Thyroid gland (tissue), 4 donors: ENCODE measurements at regions of chr12 and their contacts with region 1.

Region 1: DNA sequence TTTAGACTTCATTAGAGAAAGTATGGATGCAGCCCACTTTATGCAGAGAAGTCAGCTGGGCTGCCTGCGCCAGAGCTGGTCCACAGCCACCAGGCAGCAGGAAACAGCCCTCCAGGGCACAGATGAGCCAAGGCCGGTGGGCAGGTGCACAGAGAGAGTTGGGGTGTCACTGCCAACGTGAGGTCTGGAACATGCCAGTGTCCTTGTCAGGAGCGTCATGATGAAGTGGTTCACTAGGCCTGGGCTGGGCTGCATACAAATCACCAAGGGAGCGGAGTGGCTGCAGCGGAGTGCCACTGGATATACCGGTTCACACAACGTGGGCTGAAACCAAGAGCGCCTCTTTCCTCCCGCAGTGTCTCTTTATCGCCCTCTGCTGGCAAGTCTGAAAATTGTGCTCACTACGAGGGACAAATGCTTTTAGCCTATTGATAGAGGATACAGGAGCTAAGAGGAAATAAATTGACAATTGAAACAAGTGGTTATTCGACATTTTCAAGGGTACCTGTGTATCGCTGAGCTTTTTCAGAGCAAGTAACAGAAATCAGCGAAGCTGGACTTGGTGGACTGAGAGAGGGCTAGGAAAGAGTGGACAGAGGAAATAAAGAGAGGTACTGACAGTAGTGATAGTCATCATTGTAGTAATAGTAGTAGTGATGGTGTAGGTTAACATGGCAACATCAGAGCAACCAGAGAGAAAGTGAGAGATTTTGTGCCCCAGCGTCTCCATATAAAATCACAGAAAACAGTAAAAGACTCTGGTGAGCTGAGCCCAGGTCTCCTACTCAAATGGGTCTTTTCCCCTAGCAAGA is 52.0 kb upstream of the ITPR2 start:
- DNase-seq: peak; percentile 90
- H3K4me3 ChIP-seq: no peak overlapping the region
- H3K27ac ChIP-seq: no peak overlapping the region
- H3K4me1 ChIP-seq: peaks cover 4% of the 10 kb centered on the region in 2 donors
- H3K27me3 ChIP-seq: no peaks in the 10 kb centered on the region
- CTCF ChIP-seq: peak; percentile 93 to 97 (median 96)
- POLR2A ChIP-seq: no peak

Region 2: DNA sequence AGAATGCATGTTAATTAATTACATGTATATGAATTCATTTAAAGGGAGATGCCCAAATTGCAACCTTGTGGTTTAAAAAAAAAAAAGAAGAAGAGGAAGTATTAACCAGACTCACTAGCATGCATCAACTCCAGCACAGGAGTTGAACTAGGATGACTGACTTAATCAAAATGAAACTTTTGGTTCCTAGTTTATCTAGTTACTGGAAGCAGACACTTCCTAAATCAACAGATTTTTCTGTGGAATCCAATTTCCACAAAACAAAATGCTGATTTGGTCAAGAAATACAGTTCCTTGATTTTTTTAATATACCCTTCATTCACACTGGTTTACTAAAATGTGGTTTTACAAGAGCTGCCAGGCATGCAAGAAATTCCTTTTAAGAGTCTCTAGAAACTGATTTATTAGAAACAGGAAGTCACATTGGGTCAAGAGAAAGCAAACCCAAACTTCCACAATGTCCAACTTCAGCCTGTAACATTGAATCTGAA is 93.6 kb before region 1 on chr12:
- intact Hi-C with region 1: no loop called
- DNase-seq: no peak
- H3K4me3 ChIP-seq: no peak overlapping the region
- H3K27ac ChIP-seq: peak overlapping the region in 2 of 3 donors; percentile 41 to 59
- H3K4me1 ChIP-seq: peaks cover 7 to 29% of the 10 kb centered on the region in 2 donors
- H3K27me3 ChIP-seq: no peaks in the 10 kb centered on the region
- CTCF ChIP-seq: no peak
- POLR2A ChIP-seq: no peak

Region 3: DNA sequence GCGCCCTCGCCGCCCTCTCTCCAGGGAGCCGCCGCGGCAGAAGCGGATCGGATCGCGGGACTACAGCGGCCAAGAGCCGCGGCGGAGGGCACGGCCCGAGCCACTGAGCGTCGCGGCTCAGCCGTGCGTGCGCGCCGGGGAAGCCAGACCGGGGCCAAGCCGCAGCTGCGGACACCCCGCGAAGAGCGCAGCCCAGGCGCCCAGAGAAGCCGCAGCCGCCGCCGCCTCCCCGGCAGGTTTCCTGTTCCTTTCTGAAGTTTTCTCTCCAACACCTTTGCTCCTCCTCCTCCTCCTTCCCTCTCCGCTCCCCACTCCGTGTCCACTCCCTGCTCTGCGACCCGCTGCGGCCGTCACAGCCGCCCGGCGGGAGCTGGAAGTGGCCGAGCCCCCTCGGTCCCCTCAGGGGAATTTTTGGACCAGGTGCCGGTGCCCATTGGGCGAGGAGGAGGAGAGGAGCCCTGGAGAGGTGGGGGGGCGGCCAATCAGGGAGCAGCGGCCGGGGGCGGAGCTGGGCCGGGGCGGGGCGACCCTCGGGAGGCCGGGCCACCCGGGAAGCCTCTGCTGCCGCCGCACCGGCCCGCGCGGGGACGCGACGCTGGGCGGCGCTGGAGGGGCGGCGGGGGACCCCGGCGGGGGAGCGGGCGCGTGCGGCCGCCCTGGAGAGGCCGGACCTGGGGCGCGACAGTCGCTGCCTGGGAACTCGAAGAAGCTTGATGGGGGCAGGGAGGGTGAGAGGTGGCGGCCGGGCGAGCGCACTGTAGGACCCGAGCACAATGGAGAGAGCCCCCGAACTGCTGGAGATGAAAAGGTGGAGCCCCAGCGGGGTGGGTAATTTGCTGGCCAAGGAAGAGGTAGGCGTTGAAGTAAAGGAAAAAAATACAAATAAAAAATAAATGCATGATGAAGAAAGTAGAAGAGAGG is 51.9 kb before region 1 on chr12 and contains the start of gene ITPR2:
- intact Hi-C with region 1: loop called (anchors 10 kb)
- DNase-seq: peak; percentile 97 to 98
- H3K4me3 ChIP-seq: peak within 1 kb of the TSS; percentile 27 to 63 (median 59)
- H3K27ac ChIP-seq: peak within 1 kb of the TSS; percentile 71 to 94 (median 91)
- H3K4me1 ChIP-seq: peaks cover 4 to 5% of the 10 kb centered on the region in 2 donors
- H3K27me3 ChIP-seq: no peaks in the 10 kb centered on the region
- CTCF ChIP-seq: peak in 3 of 6 experiments; percentile 19 to 62 (median 35)
- POLR2A ChIP-seq: peak; percentile 88 to 98
- total RNA-seq, gene ITPR2: 24.4 to 39.7 (median 33.7) TPM

Region 4: DNA sequence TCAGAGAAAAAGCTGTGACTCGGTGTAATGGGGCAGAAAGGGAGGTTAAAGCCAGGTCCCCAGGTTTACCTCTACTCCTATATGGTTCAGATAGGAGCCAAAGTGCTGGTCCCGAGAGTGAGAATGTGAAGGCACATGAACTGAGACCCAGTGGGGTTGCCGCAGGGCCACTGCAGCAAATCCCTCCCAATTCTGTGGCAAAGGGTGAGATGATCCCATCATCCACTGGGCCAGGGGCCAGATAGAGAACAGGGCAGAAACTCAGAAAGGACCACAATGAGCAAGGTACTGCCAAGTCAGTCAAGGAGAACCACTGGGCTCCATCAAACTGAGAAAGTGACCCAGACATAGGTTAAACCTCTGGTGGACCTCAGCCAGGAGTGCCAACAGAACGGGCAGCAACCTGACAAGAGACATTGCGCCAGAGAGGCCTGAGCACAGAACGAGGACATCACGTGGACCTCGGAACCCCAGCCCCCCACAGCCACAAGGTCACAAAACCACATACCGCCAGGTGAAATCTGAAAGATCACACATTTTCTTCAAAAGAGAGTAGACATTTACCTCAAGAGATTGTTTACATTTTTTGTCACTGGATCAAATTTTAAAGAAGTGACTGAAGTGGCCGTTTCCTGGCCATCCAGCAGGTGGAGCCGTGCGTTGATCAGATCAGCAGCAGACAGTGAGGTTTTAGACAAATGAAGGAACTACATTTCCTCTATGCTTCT is 31.5 kb before region 1 on chr12:
- intact Hi-C with region 1: loop called (anchors 5 kb)
- DNase-seq: peak; percentile 65 to 69
- H3K4me3 ChIP-seq: no peak overlapping the region
- H3K27ac ChIP-seq: no peak overlapping the region
- H3K4me1 ChIP-seq: peaks cover 0 to 4% of the 10 kb centered on the region in 2 donors
- H3K27me3 ChIP-seq: no peaks in the 10 kb centered on the region
- CTCF ChIP-seq: peak; percentile 44 to 93 (median 86)
- POLR2A ChIP-seq: no peak